ENCODE measurements at regions of chr17 and their contacts with region 1.

Region 1: GRCh38 chr17:7703584-7704479 is 1.2 kb upstream of the EFNB3 start:
- DNase-seq: peak; percentile 81
- ATAC-seq: peak; percentile 68
- H3K4me3 Mint-ChIP-seq: peak overlapping the region; percentile 86
- H3K27ac Mint-ChIP-seq: peak overlapping the region; percentile 88
- H3K4me1 Mint-ChIP-seq: peaks cover 30% of the 10 kb centered on the region
- H3K27me3 Mint-ChIP-seq: peaks cover 13% of the 10 kb centered on the region
- CTCF ChIP-seq: no peak

Region 2: GRCh38 chr17:7716901-7717755 is 13.3 kb after region 1 on chr17 and contains the start of gene DNAH2:
- CTCF ChIA-PET with region 1: interaction called, 72 read pairs
- POLR2A ChIA-PET with region 1: interaction called, 15 read pairs
- DNase-seq: peak; percentile 96
- ATAC-seq: peak; percentile 88
- H3K4me3 Mint-ChIP-seq: peak within 1 kb of the TSS; percentile 83
- H3K27ac Mint-ChIP-seq: peak within 1 kb of the TSS; percentile 72; the same call in 1 of the 2 replicates
- H3K4me1 Mint-ChIP-seq: peaks cover 36% of the 10 kb centered on the region
- H3K27me3 Mint-ChIP-seq: peaks cover 47% of the 10 kb centered on the region
- CTCF ChIP-seq: no peak
- total RNA-seq, gene DNAH2: 0.17 to 0.34 TPM (median 0.27 TPM) in 3 replicates